ENCODE measurements at regions of chr4 and their contacts with region 1.

Region 1: DNA sequence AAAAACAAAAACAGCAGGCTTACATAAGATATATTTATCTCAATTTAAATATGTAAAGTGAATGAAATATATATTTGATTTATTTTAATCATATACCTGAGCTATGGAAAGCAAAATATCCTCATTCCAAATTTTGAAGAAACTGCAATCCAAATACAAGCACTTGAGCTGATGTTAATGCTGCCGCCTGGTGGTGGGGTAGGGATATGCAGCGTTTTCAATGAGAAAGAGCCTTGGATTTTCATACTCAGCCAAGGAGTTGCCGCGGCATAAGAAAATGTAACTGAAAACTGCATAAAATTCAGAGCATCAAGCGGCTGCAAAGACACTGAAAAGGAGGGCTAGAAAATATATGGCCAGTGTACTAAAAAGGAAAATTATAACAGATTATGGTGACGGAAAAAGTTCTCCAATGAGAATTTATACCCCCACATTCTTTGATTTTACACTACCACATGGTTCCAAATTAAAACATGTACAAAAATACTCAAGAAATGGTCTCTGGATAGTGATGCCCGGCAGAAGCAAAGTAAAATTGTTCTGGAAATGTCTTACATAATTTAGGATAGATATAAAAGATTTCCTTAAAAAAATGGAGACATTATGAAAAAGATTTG is 660.3 kb upstream of the PITX2 start:
- DNase-seq: peak; percentile 57
- ATAC-seq: 0 out of 2 replicates have a peak, but pooled peaks have one; percentile 44
- H3K4me3 ChIP-seq: no peak overlapping the region
- H3K27ac ChIP-seq: no peak overlapping the region
- H3K4me1 ChIP-seq: no peaks in the 10 kb centered on the region
- H3K27me3 ChIP-seq: no peaks in the 10 kb centered on the region
- CTCF ChIP-seq: peak; percentile 70
- POLR2A ChIP-seq: no peak
- RAD21 ChIP-seq: peak; percentile 60

Region 2: DNA sequence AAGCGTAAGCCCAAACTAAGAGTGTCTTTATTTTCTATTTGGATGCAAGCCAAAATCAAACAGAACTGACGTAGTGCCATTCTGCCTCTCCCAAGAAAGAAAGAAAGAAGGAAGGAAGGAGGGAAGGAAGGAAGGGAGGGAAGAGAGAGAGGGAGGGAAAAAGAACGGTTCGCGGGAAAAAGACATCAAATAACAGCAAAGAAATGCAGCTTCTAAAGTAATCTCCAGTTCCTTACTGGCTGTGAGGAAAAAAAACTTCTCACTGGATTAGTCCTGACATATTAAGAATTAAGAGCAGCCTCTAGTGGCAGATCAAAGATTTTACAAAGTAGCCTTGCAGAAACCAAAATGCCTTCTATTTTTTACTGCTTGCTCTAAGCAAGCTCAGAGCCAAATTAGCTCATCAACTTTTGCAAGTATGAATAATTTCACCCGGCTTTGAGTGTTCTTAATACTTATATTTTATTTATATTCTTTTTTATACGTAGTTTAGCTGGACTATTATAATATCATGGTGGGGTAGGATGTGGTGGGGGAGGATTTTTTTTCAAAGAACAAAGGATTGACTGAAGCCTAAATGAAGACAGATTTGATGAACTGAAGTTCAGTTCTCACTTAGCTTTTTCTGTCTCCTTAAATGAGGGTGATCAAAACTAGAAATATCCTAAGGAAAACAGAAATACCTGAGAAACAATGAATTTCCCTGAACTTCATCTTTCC is 696.9 kb before region 1 on chr4:
- CTCF ChIA-PET with region 1: no interaction called
- POLR2A ChIA-PET with region 1: no interaction called
- dilution Hi-C with region 1: no loop called
- in situ Hi-C with region 1: no loop called
- intact Hi-C with region 1: no loop called
- DNase-seq: peak; percentile 69
- ATAC-seq: peak; percentile 91
- H3K4me3 ChIP-seq: no peak overlapping the region; the same call in 1 of the 2 replicates
- H3K27ac ChIP-seq: no peak overlapping the region
- H3K4me1 ChIP-seq: no peaks in the 10 kb centered on the region
- H3K27me3 ChIP-seq: no peaks in the 10 kb centered on the region
- CTCF ChIP-seq: peak; percentile 57
- POLR2A ChIP-seq: no peak
- RAD21 ChIP-seq: peak; percentile 32

Region 3: DNA sequence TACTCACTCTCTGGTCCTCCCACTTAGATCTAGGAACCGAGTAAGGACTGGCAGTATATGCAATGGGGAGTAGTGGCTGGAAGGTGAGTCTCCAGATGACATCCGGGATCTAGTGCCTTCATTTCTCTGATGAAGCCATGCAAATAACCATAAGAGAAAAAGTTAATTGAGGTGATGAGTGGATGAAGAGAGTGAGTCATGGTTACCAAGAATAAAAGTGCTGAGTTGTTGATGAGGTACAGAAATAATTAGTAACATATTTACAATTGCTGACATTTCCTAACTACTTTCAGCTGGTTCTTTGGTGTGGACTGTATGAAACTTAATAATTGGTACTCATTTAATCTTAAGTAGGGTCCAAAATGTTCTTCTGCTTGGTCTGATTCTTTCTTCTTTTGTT is 513.6 kb before region 1 on chr4:
- CTCF ChIA-PET with region 1: no interaction called
- POLR2A ChIA-PET with region 1: no interaction called
- dilution Hi-C with region 1: no loop called
- in situ Hi-C with region 1: no loop called
- intact Hi-C with region 1: no loop called
- DNase-seq: no peak
- ATAC-seq: no peak
- H3K4me3 ChIP-seq: no peak overlapping the region
- H3K27ac ChIP-seq: no peak overlapping the region
- H3K4me1 ChIP-seq: no peaks in the 10 kb centered on the region
- H3K27me3 ChIP-seq: no peaks in the 10 kb centered on the region
- CTCF ChIP-seq: no peak
- POLR2A ChIP-seq: no peak
- RAD21 ChIP-seq: no peak

Region 4: DNA sequence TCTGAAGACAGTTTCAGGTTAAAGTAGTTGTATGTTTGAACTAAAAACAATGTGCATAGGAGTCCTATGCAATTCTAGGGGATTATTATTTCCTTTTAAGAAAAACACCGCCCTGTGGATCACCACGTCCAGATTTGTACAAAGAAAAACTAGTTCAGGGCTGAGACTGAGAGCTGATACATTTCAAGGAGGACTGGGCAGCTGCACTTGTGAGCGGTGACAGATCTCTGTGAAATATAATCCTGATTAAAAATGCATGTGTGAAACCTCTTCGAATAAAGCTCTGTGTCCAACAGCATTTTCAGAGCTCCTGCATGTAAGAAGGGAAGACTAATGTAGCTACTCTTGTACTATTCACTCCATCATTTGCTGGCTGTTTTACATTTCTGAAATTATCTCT is 294.4 kb before region 1 on chr4:
- CTCF ChIA-PET with region 1: no interaction called
- POLR2A ChIA-PET with region 1: no interaction called
- dilution Hi-C with region 1: no loop called
- in situ Hi-C with region 1: no loop called
- intact Hi-C with region 1: no loop called
- DNase-seq: no peak
- ATAC-seq: no peak
- H3K4me3 ChIP-seq: no peak overlapping the region
- H3K27ac ChIP-seq: no peak overlapping the region
- H3K4me1 ChIP-seq: no peaks in the 10 kb centered on the region
- H3K27me3 ChIP-seq: no peaks in the 10 kb centered on the region
- CTCF ChIP-seq: no peak
- POLR2A ChIP-seq: no peak
- RAD21 ChIP-seq: no peak

Region 5: GRCh38 chr4:111011458-111011857 is 271.7 kb before region 1 on chr4:
- CTCF ChIA-PET with region 1: no interaction called
- POLR2A ChIA-PET with region 1: no interaction called
- dilution Hi-C with region 1: no loop called
- in situ Hi-C with region 1: no loop called
- intact Hi-C with region 1: no loop called
- DNase-seq: no peak
- ATAC-seq: no peak
- H3K4me3 ChIP-seq: no peak overlapping the region
- H3K27ac ChIP-seq: no peak overlapping the region
- H3K4me1 ChIP-seq: no peaks in the 10 kb centered on the region
- H3K27me3 ChIP-seq: no peaks in the 10 kb centered on the region; the same call in 1 of the 2 replicates
- CTCF ChIP-seq: no peak
- POLR2A ChIP-seq: no peak
- RAD21 ChIP-seq: no peak

Region 6: DNA sequence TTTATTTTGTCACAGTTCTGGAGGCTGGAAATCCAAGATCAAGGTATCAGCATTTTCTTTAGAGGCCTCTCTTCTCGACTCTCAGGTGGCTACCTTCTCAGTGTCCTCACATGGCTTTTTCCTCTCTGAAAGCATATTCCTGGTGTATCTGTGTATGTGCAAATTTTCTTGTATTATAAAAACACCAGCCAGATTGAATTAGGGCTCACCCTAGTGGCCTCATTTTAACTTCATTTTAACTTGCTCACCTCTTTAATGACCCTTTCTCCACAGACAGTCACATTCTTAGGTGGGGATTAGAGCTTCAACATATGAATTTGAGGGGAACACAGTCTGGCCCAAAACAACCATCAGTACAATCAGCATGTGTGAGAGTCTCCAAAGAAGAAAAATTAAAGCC is 319.7 kb after region 1 on chr4:
- CTCF ChIA-PET with region 1: no interaction called
- POLR2A ChIA-PET with region 1: no interaction called
- dilution Hi-C with region 1: no loop called
- in situ Hi-C with region 1: no loop called
- intact Hi-C with region 1: loop called (anchors 10 kb)
- DNase-seq: peak; percentile 28
- ATAC-seq: peak; percentile 92
- H3K4me3 ChIP-seq: no peak overlapping the region
- H3K27ac ChIP-seq: no peak overlapping the region
- H3K4me1 ChIP-seq: peaks cover 1% of the 10 kb centered on the region; the same call in 1 of the 2 replicates
- H3K27me3 ChIP-seq: no peaks in the 10 kb centered on the region
- CTCF ChIP-seq: peak; percentile 45; the same call in 1 of the 2 replicates
- POLR2A ChIP-seq: no peak
- RAD21 ChIP-seq: peak; percentile 47

Measured in IMR-90 (cell line).